ENCODE measurements at regions of chr20 and their contacts with region 1.

Region 1: DNA sequence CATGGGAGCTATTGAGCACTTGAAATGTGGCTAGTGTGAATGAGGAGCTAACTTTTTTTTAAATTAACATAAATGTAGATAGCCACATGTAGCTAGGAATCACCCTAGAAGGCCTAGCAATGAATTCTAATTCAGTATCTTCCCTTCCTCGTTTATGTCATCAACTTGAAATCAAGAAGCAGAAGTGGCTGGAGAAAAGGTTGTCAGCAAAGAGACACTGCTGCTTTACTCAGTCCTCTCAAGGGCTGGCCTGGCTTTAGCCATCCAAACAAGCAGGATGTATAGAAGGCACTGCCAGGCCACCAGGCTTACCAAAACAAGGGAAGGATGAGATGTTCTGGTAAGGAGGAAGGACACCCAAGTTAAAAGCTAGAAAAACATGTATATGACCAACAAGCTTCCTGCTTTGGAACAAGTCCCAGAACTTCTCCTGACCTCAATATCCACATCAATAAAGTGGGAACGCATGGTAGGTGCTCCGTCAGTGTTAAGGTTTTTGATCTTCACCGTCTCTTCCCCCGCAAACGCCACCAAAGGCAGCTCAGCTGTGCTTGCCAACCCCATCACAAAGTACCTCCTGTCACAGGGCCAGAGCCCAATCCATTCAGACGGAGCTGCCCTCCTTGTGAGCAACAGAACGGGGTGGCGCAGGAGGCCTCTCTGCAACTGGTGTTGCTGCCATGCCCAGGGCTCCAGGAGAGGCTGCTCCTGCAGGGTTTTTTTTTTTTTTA is 235.8 kb upstream of the RIN2 start:
- DNase-seq: no peak
- H3K4me3 ChIP-seq: no peak overlapping the region
- H3K27ac ChIP-seq: no peak overlapping the region
- H3K4me1 ChIP-seq: peaks cover 50% of the 10 kb centered on the region
- H3K27me3 ChIP-seq: no peaks in the 10 kb centered on the region
- CTCF ChIP-seq: no peak

Region 2: DNA sequence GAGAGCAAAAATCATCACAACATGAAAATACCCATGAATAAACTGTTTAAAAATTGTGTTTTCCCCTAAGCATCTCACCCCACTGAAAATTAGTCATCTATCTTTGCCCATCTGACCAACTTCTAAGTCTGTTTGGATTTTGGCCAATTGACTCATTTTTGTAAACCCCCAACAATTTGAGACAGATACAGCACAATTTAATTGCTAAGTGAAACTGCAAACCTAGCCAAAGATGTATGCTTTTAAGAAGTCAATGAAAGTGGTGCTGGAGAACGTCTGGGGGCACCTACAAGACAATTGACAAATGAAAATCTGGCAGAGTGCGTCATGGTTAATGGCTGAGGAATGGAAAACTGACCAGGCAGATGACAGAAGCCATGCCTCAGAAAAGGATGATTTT is 340.7 kb before region 1 on chr20:
- CTCF ChIA-PET with region 1: no interaction called
- POLR2A ChIA-PET with region 1: no interaction called
- intact Hi-C with region 1: no loop called
- DNase-seq: no peak
- H3K4me3 ChIP-seq: no peak overlapping the region
- H3K27ac ChIP-seq: no peak overlapping the region
- H3K4me1 ChIP-seq: no peaks in the 10 kb centered on the region
- H3K27me3 ChIP-seq: no peaks in the 10 kb centered on the region
- CTCF ChIP-seq: no peak

Region 3: DNA sequence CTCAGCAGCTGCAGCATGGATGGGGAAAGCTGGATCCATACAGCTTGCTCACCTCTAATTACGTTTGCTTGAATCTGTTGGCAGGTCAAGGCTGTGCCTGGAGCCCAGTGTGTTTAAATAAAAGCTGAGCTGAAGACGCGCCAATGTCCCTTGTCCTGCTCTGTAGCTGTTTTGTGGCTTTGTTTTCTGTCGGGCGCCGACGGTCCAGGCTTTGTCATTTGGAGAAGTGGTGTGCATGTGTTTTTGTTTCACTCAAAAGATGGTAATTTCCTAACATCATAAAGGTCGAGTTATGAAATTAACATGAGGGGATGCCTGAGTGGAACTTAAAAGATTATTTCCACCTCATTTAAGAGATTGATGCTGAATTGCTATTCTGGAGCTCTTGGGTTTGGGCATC is 202.2 kb before region 1 on chr20:
- CTCF ChIA-PET with region 1: no interaction called
- POLR2A ChIA-PET with region 1: no interaction called
- intact Hi-C with region 1: loop called (anchors 5 kb)
- DNase-seq: peak; percentile 47
- H3K4me3 ChIP-seq: peak overlapping the region; percentile 40
- H3K27ac ChIP-seq: peak overlapping the region; percentile 92
- H3K4me1 ChIP-seq: peaks cover 92% of the 10 kb centered on the region
- H3K27me3 ChIP-seq: no peaks in the 10 kb centered on the region
- CTCF ChIP-seq: no peak

Measured in A673 (cell line).